ENCODE measurements at regions of chr1 and their contacts with region 1.

Region 1: DNA sequence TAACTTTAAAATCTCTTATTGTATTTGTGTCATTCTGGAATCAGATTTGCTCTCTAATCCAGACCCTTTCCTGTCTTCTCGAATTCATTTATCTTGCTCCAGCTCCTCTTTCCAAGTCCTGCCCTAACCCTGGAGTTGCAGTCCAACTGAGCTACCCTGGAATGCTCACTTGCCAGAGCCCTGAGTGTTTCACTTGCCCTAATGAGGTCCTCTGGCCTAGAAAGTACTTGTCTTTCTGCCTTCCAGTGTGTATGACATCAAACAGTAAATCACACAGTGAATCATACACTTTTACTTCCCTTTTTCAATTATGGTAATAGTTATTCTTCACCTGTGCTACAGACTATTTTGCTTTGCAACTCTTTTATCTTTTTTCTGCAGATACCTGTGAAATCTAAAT is 96.9 kb downstream of the NEK7 start:
- DNase-seq: no peak
- H3K4me3 Mint-ChIP-seq: no peak overlapping the region
- H3K27ac Mint-ChIP-seq: peak overlapping the region; percentile 61
- H3K4me1 Mint-ChIP-seq: peaks cover 36% of the 10 kb centered on the region
- H3K27me3 Mint-ChIP-seq: no peaks in the 10 kb centered on the region

Region 2: DNA sequence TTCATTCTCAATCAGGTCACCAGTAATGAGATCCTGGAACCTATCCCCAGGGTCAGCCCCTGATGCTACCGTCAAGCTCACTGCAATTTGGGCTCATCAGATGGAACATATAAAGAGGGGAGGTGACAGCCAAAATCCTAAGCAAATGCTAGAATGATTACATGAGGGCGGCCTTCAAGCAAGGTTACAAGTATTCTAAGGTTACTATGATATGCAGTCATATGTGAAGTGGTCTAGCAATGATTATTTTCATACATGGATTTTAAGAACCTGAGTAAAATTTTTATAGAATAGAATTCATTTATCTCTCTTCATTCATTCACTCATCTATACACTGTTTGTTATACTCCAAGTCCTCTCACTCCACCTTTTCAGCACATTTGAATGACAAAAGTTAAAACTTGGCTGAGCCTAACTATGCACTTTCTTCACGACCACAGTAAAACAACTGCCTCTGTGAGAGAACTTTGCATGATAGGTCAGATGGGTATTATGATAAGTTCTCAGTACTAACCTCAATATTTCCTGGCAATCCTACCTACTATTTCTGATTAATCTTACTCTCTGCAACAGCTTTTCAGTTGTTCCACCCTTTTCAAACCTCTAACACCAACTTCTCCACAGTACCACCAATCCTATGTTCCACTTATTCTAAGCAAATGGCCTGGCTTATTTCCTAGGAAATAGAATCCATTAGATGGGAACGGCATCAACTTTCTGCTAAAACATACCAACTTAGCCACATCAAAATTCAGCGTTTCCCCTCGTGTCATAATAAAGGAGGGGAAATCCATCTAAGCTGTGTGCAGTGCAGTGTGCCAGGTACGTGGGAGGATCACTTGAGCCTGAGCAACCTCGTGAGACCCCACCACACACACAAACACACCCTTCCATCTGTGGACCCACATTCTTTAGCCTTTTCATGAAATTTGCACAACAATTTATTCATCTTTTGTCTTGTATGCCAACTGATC is 304.5 kb before region 1 on chr1:
- CTCF ChIA-PET with region 1: no interaction called
- POLR2A ChIA-PET with region 1: no interaction called
- intact Hi-C with region 1: loop called (anchors 10 kb)
- DNase-seq: peak; percentile 35
- H3K4me3 Mint-ChIP-seq: peak overlapping the region; percentile 11
- H3K27ac Mint-ChIP-seq: peak overlapping the region; percentile 80
- H3K4me1 Mint-ChIP-seq: peaks cover 22% of the 10 kb centered on the region
- H3K27me3 Mint-ChIP-seq: no peaks in the 10 kb centered on the region

Region 3: DNA sequence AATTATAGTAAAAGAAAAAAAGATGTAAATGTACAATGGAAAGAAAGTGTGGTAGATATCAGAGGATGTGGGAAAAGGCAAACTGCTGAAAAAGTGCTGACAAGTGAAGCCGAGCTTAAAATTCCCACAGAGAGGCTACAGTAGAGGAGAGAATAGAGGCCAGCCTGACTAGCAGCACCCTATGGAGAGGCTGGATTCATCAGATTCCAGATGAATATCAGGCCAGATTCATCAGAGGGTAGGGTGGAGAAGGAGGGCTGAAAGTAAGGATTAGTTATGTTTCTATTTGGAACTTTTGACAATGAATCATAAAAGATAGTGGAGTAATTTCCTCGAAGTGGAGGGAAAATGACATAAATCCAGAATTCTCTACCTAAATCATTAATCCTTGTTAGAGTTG is 157.3 kb before region 1 on chr1:
- CTCF ChIA-PET with region 1: no interaction called
- POLR2A ChIA-PET with region 1: no interaction called
- intact Hi-C with region 1: no loop called
- DNase-seq: no peak
- H3K4me3 Mint-ChIP-seq: no peak overlapping the region
- H3K27ac Mint-ChIP-seq: no peak overlapping the region
- H3K4me1 Mint-ChIP-seq: no peaks in the 10 kb centered on the region
- H3K27me3 Mint-ChIP-seq: no peaks in the 10 kb centered on the region

Region 4: GRCh38 chr1:198201956-198202784 is 51.5 kb before region 1 on chr1:
- CTCF ChIA-PET with region 1: no interaction called
- POLR2A ChIA-PET with region 1: no interaction called
- intact Hi-C with region 1: loop called (anchors 2 kb)
- DNase-seq: peak; percentile 75
- H3K4me3 Mint-ChIP-seq: peak overlapping the region; percentile 40
- H3K27ac Mint-ChIP-seq: peak overlapping the region; percentile 75
- H3K4me1 Mint-ChIP-seq: peaks cover 75% of the 10 kb centered on the region
- H3K27me3 Mint-ChIP-seq: no peaks in the 10 kb centered on the region

Region 5: DNA sequence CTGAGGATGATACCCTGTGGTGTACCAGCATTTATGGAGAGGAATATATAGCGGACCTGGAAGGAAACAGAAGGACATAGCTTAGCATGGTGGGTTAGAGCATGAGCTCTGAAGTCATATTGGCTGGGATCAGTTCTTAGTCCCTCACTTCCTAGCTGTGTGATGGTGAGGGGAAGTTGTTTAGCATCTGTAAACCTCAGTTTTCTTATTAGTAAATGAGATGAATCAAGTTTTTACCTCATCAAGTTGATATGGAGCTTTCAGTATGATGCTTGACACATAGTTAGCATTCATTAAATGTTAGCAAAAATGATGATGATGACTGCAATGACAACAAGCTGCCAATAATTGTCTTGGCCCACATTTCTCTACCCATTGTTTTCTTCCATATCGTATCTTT is 12.1 kb before region 1 on chr1:
- CTCF ChIA-PET with region 1: no interaction called
- POLR2A ChIA-PET with region 1: no interaction called
- intact Hi-C with region 1: loop called (anchors 1 kb)
- DNase-seq: no peak
- H3K4me3 Mint-ChIP-seq: no peak overlapping the region
- H3K27ac Mint-ChIP-seq: no peak overlapping the region
- H3K4me1 Mint-ChIP-seq: peaks cover 16% of the 10 kb centered on the region
- H3K27me3 Mint-ChIP-seq: no peaks in the 10 kb centered on the region

Region 6: GRCh38 chr1:198437332-198437731 is 183.7 kb after region 1 on chr1:
- CTCF ChIA-PET with region 1: no interaction called
- POLR2A ChIA-PET with region 1: no interaction called
- intact Hi-C with region 1: no loop called
- DNase-seq: no peak
- H3K4me3 Mint-ChIP-seq: no peak overlapping the region
- H3K27ac Mint-ChIP-seq: no peak overlapping the region
- H3K4me1 Mint-ChIP-seq: no peaks in the 10 kb centered on the region
- H3K27me3 Mint-ChIP-seq: peaks cover 4% of the 10 kb centered on the region

Region 7: GRCh38 chr1:198465201-198466144 is 211.8 kb after region 1 on chr1:
- CTCF ChIA-PET with region 1: no interaction called
- POLR2A ChIA-PET with region 1: no interaction called
- intact Hi-C with region 1: loop called (anchors 2 kb)
- DNase-seq: no peak
- H3K4me3 Mint-ChIP-seq: no peak overlapping the region
- H3K27ac Mint-ChIP-seq: no peak overlapping the region
- H3K4me1 Mint-ChIP-seq: peaks cover 12% of the 10 kb centered on the region
- H3K27me3 Mint-ChIP-seq: no peaks in the 10 kb centered on the region